CD4-positive, alpha-beta memory T cell (primary cell): ENCODE measurements at regions of chr11 and their contacts with region 1.

Region 1: GRCh38 chr11:62421996-62422395 is 3.2 kb downstream of the SCGB1A1 start:
- DNase-seq: no peak
- H3K4me3 ChIP-seq: no peak overlapping the region
- H3K4me3 Mint-ChIP-seq: no peak overlapping the region
- H3K27ac ChIP-seq: no peak overlapping the region
- H3K27ac Mint-ChIP-seq: peak overlapping the region in 1 of 7 donors; percentile 55
- H3K4me1 ChIP-seq: peaks cover 19% of the 10 kb centered on the region
- H3K4me1 Mint-ChIP-seq: peaks cover 10 to 16% (median 14%) of the 10 kb centered on the region in 4 donors
- H3K27me3 ChIP-seq: no peaks in the 10 kb centered on the region
- H3K27me3 Mint-ChIP-seq: no peaks in the 10 kb centered on the region

Region 2: DNA sequence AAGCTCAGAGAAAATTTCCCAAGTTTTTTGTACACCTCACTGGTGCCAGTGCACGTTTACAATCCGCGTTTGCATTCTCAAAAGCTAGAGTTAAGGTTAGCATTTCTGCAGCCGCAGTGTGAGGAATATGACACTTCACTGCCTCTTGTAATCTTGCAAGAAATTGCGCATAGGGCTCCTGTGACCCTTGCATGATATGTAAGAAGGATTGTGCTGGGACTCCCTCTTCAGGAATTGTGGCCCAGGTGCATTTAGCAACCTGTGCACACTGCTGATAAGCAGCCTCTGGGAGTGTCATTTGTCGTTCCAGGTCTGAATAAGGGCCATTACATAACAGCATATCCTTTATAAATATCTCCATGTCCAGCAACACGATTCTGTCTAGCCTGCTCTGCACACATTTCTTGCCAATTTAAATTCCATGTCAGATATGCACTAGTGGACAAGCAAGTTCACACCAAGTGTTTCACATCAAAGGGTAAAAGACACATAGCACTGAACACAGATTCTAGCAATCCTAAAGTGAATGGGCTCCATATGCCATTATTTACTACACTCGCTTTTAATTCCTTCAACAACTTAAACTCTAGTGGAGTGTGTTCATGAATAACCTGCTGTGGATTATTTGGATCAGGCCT is 367.4 kb before region 1 on chr11:
- CTCF ChIA-PET with region 1: no interaction called
- POLR2A ChIA-PET with region 1: no interaction called
- intact Hi-C with region 1: no loop called
- DNase-seq: peak; percentile 11 to 53 (median 36)
- H3K4me3 ChIP-seq: no peak overlapping the region
- H3K4me3 Mint-ChIP-seq: no peak overlapping the region
- H3K27ac ChIP-seq: no peak overlapping the region
- H3K27ac Mint-ChIP-seq: peak overlapping the region in 1 of 7 donors; percentile 29
- H3K4me1 ChIP-seq: no peaks in the 10 kb centered on the region
- H3K4me1 Mint-ChIP-seq: no peaks in the 10 kb centered on the region
- H3K27me3 ChIP-seq: no peaks in the 10 kb centered on the region
- H3K27me3 Mint-ChIP-seq: peaks cover 0 to 3% of the 10 kb centered on the region in 2 donors

Region 3: GRCh38 chr11:62411524-62411923 is 10.5 kb before region 1 on chr11:
- CTCF ChIA-PET with region 1: interaction called, 30 read pairs
- POLR2A ChIA-PET with region 1: no interaction called
- intact Hi-C with region 1: no loop called
- DNase-seq: no peak
- H3K4me3 ChIP-seq: no peak overlapping the region
- H3K4me3 Mint-ChIP-seq: no peak overlapping the region
- H3K27ac ChIP-seq: no peak overlapping the region
- H3K27ac Mint-ChIP-seq: no peak overlapping the region
- H3K4me1 ChIP-seq: no peaks in the 10 kb centered on the region
- H3K4me1 Mint-ChIP-seq: no peaks in the 10 kb centered on the region
- H3K27me3 ChIP-seq: no peaks in the 10 kb centered on the region
- H3K27me3 Mint-ChIP-seq: no peaks in the 10 kb centered on the region